ENCODE measurements at regions of chr16 and their contacts with region 1.

Region 1: DNA sequence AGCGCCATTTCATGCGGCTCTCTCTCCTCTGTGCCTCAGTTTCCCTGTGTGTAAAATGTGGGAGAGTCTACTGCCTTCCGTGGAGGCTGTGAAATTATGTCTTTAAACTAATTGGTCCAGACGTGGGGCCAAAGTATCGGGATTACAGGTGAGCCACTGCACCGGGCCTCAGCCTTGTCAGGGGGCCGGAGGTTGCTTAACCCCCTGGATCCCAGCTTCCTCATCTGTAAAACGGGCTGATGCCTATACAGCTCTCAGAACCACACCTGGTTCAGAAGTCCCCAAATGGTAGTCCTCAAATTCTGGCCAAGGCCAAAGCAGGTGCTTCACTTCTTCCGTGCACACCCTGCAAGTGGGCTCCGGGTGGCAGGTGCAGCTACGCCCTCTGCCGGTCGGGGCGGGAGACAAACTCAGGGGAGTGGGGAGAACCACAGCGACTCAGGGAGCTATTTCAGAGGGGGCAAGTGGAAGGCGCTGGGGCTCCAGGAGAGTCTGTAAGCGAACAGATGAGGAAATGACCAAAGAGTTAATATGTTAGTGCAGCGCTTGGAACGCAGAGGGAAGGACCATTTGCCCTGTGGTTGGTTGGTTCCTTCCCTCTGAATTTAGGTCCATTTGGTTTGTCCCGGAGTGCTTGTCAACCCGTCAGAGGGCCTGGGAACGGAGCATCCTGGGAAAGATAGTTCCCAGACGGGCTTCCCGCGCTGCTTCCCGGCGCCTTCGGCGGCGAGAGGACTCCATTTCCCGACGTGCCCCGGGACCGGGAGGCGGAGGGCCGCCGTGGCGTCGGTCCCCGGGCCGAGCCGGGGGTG is at the start of gene MGRN1:
- DNase-seq: peak; percentile 96
- H3K4me3 ChIP-seq: peak within 1 kb of the TSS; percentile 62
- H3K27ac ChIP-seq: peak within 1 kb of the TSS; percentile 91
- H3K27me3 ChIP-seq: no peaks in the 10 kb centered on the region
- CTCF ChIP-seq: peak; percentile 96
- polyA plus RNA-seq, gene MGRN1: 3.4 and 8.6 TPM in 2 replicates

Region 2: GRCh38 chr16:4637501-4638166 is 13.4 kb after region 1 on chr16:
- CTCF ChIA-PET with region 1: interaction called, 26 read pairs
- POLR2A ChIA-PET with region 1: interaction called, 4 read pairs
- DNase-seq: no peak
- H3K4me3 ChIP-seq: no peak overlapping the region
- H3K27ac ChIP-seq: no peak overlapping the region
- H3K27me3 ChIP-seq: no peaks in the 10 kb centered on the region
- CTCF ChIP-seq: no peak

Measured in AG04450 (cell line).